ENCODE measurements at regions of chr5 and their contacts with region 1.

Region 1: DNA sequence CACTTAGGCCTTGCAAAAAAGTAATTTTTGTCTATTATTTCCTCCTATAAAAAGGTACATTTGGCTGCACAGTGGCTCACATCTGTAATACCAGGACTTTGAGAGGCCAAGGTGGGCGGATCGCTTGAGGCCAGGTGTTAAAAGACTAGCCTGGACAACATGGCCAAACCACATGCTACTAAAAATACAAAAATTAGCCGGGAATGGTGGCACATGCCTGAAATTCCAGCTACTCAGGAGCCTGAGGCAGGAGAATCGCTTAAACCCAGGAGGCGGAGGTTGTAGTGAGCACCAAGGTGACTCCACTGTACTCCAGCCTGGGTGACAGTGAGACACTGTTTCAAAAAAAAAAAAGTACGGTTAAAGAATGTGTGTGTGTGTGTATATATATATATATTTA is 15.7 kb downstream of the NUP155 start:
- DNase-seq: no peak
- ATAC-seq: no peak
- H3K4me3 ChIP-seq: no peak overlapping the region
- H3K27ac ChIP-seq: no peak overlapping the region
- H3K4me1 ChIP-seq: no peaks in the 10 kb centered on the region
- H3K27me3 ChIP-seq: no peaks in the 10 kb centered on the region
- CTCF ChIP-seq: no peak
- POLR2A ChIP-seq: no peak
- RAD21 ChIP-seq: no peak

Region 2: GRCh38 chr5:37370864-37371726 is 15.9 kb after region 1 on chr5 and contains the start of gene NUP155:
- CTCF ChIA-PET with region 1: no interaction called
- POLR2A ChIA-PET with region 1: interaction called, 12 read pairs
- RAD21 ChIA-PET with region 1: no interaction called
- intact Hi-C with region 1: no loop called
- DNase-seq: peak; percentile 95
- ATAC-seq: peak; percentile 94
- H3K4me3 ChIP-seq: peak within 1 kb of the TSS; percentile 90 to 99
- H3K27ac ChIP-seq: peak within 1 kb of the TSS; percentile 74
- H3K4me1 ChIP-seq: peaks cover 13 to 19% of the 10 kb centered on the region in 2 experiments; a peak in 3 of 4 replicates
- H3K27me3 ChIP-seq: no peaks in the 10 kb centered on the region
- CTCF ChIP-seq: no peak
- POLR2A ChIP-seq: peak; percentile 90
- RAD21 ChIP-seq: no peak
- total RNA-seq, gene NUP155: 80.9 TPM

Measured in HCT116 (cell line).